Activated CD4-positive, alpha-beta memory T cell treated with anti-CD3 and anti-CD28 coated beads, Interleukin-2, amount 10 ng/mL, durations not matched to agents 7 days and 5 days (primary cell): ENCODE measurements at regions of chr20 and their contacts with region 1.

Region 1: GRCh38 chr20:45971675-45972499 is at the start of gene ZNF335:
- DNase-seq: peak; percentile 94
- H3K4me3 Mint-ChIP-seq: peak within 1 kb of the TSS; percentile 78
- H3K27ac Mint-ChIP-seq: peak within 1 kb of the TSS; percentile 99
- H3K4me1 Mint-ChIP-seq: peaks cover 28% of the 10 kb centered on the region
- H3K27me3 Mint-ChIP-seq: peaks cover 8% of the 10 kb centered on the region
- total RNA-seq, gene ZNF335: 35.7 to 36.7 TPM

Region 2: GRCh38 chr20:45798935-45799642 is 172.8 kb before region 1 on chr20:
- CTCF ChIA-PET with region 1: interaction called, 38 read pairs
- POLR2A ChIA-PET with region 1: interaction called, 8 read pairs
- DNase-seq: peak; percentile 74
- H3K4me3 Mint-ChIP-seq: no peak overlapping the region
- H3K27ac Mint-ChIP-seq: peak overlapping the region; percentile 33
- H3K4me1 Mint-ChIP-seq: peaks cover 22% of the 10 kb centered on the region
- H3K27me3 Mint-ChIP-seq: no peaks in the 10 kb centered on the region

Region 3: GRCh38 chr20:45823949-45824835 is 147.7 kb before region 1 on chr20:
- CTCF ChIA-PET with region 1: interaction called, 11 read pairs
- POLR2A ChIA-PET with region 1: interaction called, 15 read pairs
- DNase-seq: peak; percentile 59
- H3K4me3 Mint-ChIP-seq: peak overlapping the region; percentile 66
- H3K27ac Mint-ChIP-seq: no peak overlapping the region
- H3K4me1 Mint-ChIP-seq: peaks cover 16% of the 10 kb centered on the region
- H3K27me3 Mint-ChIP-seq: peaks cover 30% of the 10 kb centered on the region

Region 4: DNA sequence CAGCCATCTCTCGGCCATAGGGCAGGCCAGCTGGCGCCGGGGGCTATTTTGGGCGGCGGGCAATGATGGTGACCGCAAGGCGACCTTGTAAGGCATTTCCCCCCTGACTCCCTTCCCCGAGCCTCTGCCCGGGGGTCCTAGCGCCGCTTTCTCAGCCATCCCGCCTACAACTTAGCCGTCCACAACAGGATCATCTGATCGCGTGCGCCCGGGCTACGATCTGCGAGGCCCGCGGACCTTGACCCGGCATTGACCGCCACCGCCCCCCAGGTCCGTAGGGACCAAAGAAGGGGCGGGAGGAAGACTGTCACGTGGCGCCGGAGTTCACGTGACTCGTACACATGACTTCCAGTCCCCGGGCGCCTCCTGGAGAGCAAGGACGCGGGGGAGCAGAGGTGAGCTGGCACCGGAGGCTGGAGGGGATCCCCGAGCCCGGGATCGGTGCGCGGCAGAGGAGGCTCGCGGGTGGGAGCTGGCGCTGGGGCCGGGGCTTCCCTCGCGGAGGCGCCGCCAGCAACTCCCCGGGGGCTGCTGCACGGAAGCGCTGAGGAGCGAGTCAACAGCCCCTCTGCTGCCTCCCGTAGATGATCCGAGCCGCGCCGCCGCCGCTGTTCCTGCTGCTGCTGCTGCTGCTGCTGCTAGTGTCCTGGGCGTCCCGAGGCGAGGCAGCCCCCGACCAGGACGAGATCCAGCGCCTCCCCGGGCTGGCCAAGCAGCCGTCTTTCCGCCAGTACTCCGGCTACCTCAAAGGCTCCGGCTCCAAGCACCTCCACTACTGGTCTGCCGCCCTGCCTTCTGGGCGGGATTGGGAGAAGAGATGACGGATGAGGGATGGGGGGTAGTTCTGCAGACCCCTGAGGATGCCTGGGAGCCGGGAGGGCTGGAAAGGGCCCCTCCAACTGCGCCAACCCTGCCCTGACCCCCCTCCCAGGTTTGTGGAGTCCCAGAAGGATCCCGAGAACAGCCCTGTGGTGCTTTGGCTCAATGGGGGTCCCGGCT is 80.6 kb before region 1 on chr20 and contains the starts of genes CTSA and NEURL2:
- CTCF ChIA-PET with region 1: interaction called, 19 read pairs
- POLR2A ChIA-PET with region 1: interaction called, 21 read pairs
- DNase-seq: peak; percentile 87
- H3K4me3 Mint-ChIP-seq: peak within 1 kb of the TSS; percentile 88
- H3K27ac Mint-ChIP-seq: peak within 1 kb of the TSS; percentile 40
- H3K4me1 Mint-ChIP-seq: peaks cover 36% of the 10 kb centered on the region
- H3K27me3 Mint-ChIP-seq: peaks cover 5% of the 10 kb centered on the region
- total RNA-seq, gene CTSA: 64.3 to 64.6 TPM
- total RNA-seq, gene NEURL2: 1.0 to 1.6 TPM

Region 5: GRCh38 chr20:45946149-45946970 is 25.5 kb before region 1 on chr20:
- CTCF ChIA-PET with region 1: interaction called, 15 read pairs
- POLR2A ChIA-PET with region 1: interaction called, 22 read pairs
- DNase-seq: peak; percentile 75
- H3K4me3 Mint-ChIP-seq: no peak overlapping the region
- H3K27ac Mint-ChIP-seq: peak overlapping the region; percentile 80
- H3K4me1 Mint-ChIP-seq: peaks cover 38% of the 10 kb centered on the region
- H3K27me3 Mint-ChIP-seq: no peaks in the 10 kb centered on the region

Region 6: GRCh38 chr20:45987108-45987780 is 15.4 kb after region 1 on chr20:
- CTCF ChIA-PET with region 1: interaction called, 44 read pairs
- POLR2A ChIA-PET with region 1: interaction called, 10 read pairs
- DNase-seq: peak; percentile 82
- H3K4me3 Mint-ChIP-seq: no peak overlapping the region
- H3K27ac Mint-ChIP-seq: no peak overlapping the region
- H3K4me1 Mint-ChIP-seq: peaks cover 15% of the 10 kb centered on the region
- H3K27me3 Mint-ChIP-seq: peaks cover 4% of the 10 kb centered on the region

Region 7: GRCh38 chr20:46004889-46005473 is 33.1 kb after region 1 on chr20:
- CTCF ChIA-PET with region 1: interaction called, 3 read pairs
- POLR2A ChIA-PET with region 1: interaction called, 15 read pairs
- DNase-seq: peak; percentile 68
- H3K4me3 Mint-ChIP-seq: peak overlapping the region; percentile 40
- H3K27ac Mint-ChIP-seq: peak overlapping the region; percentile 68
- H3K4me1 Mint-ChIP-seq: peaks cover 69% of the 10 kb centered on the region
- H3K27me3 Mint-ChIP-seq: peaks cover 35% of the 10 kb centered on the region